BJ (cell line): ENCODE measurements at regions of chr3 and their contacts with region 1.

Region 1: DNA sequence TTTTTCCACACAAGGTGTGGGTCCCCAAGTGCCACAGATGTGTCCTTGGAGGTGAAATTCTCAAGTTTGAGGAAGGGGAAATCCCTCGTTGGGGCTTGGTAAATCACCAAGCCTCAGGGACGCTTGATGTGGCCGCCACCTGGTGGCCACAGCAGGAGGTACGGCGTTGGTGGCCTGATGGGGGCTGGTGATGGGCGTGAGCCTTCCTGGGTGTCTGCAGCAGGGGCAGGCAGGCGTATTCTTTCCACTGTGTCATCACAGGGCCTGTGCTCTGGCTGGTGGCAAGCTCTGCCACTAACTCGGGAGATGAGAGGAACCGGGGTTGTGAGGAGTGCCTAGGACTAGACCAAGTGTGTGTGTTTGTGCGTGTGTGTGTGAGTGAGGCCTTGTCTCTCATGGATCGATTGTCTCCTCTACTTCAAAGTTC is 4.2 kb downstream of the ACOX2 start:
- DNase-seq: no peak
- H3K4me3 ChIP-seq: no peak overlapping the region
- H3K27me3 ChIP-seq: no peaks in the 10 kb centered on the region
- CTCF ChIP-seq: peak; percentile 96

Region 2: DNA sequence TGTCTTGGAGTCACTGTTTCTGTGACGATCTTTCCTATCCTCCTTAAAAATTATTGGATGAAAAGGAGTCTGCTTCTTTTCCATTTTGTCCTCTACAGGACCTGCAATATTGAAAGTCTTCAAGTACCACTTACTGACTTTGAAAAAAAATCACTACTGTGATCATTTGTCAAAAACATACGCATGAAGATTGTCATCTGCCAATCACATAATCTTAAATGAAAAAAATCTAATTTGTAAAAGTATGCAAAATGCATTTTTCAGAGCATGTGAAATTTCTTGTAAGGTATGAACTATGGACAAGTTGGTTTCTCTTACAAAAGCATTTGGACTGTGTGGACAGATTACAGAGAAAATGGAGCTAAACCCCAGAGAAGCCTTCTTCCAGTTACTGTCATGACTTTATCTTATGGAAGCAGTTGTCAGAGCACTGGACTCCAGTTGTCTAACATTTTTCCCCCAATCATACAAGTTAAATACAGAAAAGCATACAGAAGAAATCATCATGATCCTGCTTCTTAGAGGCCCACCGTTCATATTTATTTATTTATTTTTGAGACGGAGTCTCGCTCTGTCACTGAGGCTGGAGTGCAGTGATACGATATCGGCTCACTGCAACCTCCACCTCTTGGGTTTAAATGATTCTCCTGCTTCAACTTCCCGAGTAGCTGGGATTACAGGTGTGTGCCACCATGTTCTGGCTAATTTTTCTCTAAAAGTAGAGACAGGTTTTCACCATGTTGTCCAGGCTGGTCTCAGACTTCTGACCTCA is 203.5 kb before region 1 on chr3:
- CTCF ChIA-PET with region 1: no interaction called
- POLR2A ChIA-PET with region 1: no interaction called
- DNase-seq: no peak
- H3K4me3 ChIP-seq: no peak overlapping the region
- H3K27me3 ChIP-seq: no peaks in the 10 kb centered on the region
- CTCF ChIP-seq: no peak

Region 3: GRCh38 chr3:58521917-58522631 is 10.7 kb before region 1 on chr3:
- CTCF ChIA-PET with region 1: interaction called, 11 read pairs
- POLR2A ChIA-PET with region 1: interaction called, 6 read pairs
- DNase-seq: no peak
- H3K4me3 ChIP-seq: no peak overlapping the region
- H3K27me3 ChIP-seq: no peaks in the 10 kb centered on the region
- CTCF ChIP-seq: no peak

Region 4: GRCh38 chr3:58647381-58648141 is 114.8 kb after region 1 on chr3:
- CTCF ChIA-PET with region 1: no interaction called
- POLR2A ChIA-PET with region 1: no interaction called
- DNase-seq: no peak
- H3K4me3 ChIP-seq: no peak overlapping the region
- H3K27me3 ChIP-seq: no peaks in the 10 kb centered on the region
- CTCF ChIP-seq: no peak

Region 5: GRCh38 chr3:58659051-58659675 is 126.4 kb after region 1 on chr3:
- CTCF ChIA-PET with region 1: no interaction called
- POLR2A ChIA-PET with region 1: no interaction called
- DNase-seq: no peak
- H3K4me3 ChIP-seq: no peak overlapping the region
- H3K27me3 ChIP-seq: peaks cover 4% of the 10 kb centered on the region
- CTCF ChIP-seq: peak; percentile 50